AG04449 (cell line): ENCODE measurements at regions of chr5 and their contacts with region 1.

Region 1: GRCh38 chr5:180291943-180292831 is at the start of gene MAPK9:
- DNase-seq: no peak
- H3K4me3 ChIP-seq: peak within 1 kb of the TSS; percentile 76
- CTCF ChIP-seq: no peak

Region 2: DNA sequence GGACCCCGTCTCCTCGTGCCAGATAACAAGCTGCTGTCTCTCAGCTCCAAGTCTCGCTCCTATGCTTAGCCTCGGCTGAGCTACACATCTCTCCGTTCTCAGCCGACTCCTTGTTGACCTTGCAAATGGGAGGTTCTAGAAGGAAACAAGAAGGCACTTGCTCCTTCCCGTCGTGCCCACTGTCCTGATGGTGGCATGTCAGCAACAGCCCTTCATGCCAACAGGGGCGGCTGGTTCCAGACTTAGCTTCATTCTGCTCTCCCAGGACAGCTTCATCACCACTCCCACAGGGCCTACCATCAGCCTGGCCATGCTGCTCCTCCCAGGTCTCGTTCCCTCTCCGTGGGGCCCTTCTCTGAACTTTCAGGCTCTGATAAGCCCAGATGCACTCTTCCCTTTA is 70.1 kb before region 1 on chr5:
- CTCF ChIA-PET with region 1: no interaction called
- POLR2A ChIA-PET with region 1: no interaction called
- DNase-seq: no peak
- H3K4me3 ChIP-seq: no peak overlapping the region
- CTCF ChIP-seq: no peak

Region 3: DNA sequence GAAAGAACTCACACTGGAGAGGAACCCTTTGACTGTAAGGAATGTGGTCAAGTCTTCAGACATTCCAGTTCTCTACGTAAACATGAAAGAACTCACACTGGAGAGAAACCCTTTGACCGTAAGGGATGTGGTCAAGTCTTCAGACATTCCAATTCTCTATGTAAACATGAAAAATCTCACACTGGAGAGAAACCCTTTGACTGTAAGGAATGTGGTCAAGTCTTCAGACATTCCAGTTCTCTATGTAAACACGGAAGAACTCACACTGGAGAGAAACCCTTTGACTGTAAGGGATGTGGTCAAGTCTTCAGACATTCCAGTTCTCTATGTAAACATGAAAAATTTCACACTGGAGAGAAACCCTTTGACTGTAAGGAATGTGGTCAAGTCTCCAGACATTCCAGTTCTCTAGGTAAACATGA is 32.9 kb before region 1 on chr5:
- CTCF ChIA-PET with region 1: no interaction called
- POLR2A ChIA-PET with region 1: no interaction called
- DNase-seq: no peak
- H3K4me3 ChIP-seq: no peak overlapping the region
- CTCF ChIP-seq: no peak

Region 4: GRCh38 chr5:180315762-180316212 is 23.6 kb after region 1 on chr5:
- CTCF ChIA-PET with region 1: interaction called, 80 read pairs
- POLR2A ChIA-PET with region 1: no interaction called
- DNase-seq: no peak
- H3K4me3 ChIP-seq: no peak overlapping the region
- CTCF ChIP-seq: peak; percentile 97

Region 5: DNA sequence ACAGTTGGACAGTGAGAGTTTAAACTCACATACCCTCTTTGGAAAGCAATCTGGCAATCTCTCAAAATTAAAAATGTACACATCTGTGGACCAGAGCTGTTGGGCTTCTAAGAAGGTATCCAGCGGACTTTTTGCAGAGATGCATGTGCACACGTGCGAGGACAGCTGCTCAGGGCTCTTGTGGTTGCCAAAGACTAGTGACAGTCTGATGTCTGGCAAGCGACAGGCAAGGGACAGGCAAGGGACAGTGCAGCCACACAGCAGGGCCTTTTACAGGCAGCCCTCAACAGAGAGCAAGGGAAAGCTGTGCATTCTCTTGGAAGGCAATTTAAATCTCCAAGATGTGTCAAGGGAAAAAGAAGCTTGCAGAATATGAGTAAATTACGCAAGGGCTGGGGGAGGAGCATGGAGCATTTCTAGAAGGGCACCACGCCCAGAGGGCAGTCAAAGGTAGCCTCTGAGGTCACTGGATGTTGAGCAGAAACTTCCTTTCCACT is 51.7 kb after region 1 on chr5:
- CTCF ChIA-PET with region 1: interaction called, 26 read pairs
- POLR2A ChIA-PET with region 1: no interaction called
- DNase-seq: no peak
- H3K4me3 ChIP-seq: no peak overlapping the region
- CTCF ChIP-seq: no peak

Region 6: DNA sequence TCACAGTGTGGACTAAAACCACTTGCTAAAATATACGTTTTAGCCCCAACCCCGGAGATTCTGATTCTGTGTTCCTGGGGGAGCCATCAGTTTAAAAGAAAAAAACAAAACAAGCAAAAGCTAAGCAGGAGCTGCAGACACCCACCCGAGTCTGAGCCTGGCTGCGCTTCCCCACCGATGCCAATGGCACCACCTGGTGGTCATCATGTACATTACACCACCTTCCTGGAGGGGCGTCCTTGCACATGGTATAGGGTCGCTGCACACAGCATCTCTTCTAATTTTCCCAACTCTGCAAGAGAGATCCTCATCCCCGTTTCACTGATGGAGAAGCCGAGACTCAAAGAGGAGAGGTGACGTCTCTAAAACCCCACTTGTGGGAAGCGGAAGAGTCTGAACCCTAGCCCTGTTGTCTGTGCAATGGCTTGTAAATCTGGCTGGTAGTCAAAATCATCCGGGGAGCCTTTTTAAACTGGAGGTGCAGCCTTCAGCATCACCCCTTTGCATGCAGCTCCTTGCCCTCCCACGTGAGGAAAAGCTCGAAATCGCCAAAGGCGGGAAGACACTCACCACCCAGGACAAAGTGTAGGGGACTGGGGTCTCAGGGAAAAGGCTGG is 178.9 kb after region 1 on chr5:
- CTCF ChIA-PET with region 1: interaction called, 279 read pairs
- POLR2A ChIA-PET with region 1: no interaction called
- DNase-seq: no peak
- H3K4me3 ChIP-seq: no peak overlapping the region
- CTCF ChIP-seq: peak; percentile 92

Region 7: GRCh38 chr5:180605554-180606214 is 313.5 kb after region 1 on chr5:
- CTCF ChIA-PET with region 1: interaction called, 19 read pairs
- POLR2A ChIA-PET with region 1: no interaction called
- DNase-seq: no peak
- H3K4me3 ChIP-seq: no peak overlapping the region
- CTCF ChIP-seq: peak; percentile 70